GM12878 (cell line): ENCODE measurements at regions of chr1 and their contacts with region 1.

Region 1: DNA sequence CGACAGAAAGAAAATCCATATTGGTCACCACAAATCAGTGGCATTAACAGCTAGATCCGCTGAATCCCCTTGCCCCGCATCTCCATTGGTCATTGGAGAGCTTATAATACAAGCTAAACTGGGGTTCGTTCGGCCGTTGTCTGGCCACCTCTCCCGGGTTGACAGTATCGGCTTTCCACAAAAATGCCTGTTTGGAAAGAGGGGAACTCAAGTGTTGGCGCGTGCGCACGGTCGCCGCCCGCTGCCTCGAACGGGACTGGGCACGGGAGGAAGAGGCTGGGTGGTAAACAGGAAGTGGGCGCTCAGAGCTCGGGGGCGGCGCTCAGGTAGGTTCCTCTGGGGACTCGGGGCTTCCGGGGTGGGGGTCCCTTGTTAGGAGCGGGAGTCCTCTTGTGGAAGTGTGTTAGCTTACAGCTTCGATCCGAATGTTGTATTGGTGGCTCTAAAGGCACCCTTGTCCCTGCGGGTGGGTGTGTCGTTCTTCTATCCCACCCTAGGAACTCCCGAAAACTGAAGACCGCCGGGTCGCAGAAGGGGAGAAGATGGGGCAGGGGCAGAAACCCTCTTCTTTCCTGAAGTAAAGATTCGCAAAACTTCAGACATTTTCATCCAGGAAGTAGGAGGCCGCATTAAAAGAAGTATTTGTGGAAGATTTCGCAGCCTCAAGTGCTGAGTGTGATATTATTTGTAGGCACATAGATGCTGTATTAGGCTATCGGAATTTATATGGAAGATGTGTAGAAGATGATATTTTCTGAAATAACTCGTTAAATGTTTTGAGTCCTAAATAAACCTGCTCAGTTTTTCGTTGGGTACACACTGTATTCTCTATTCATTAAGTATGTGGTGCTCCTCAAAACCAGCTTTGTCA is 962 bp downstream of the BROX start:
- DNase-seq: peak; percentile 88
- ATAC-seq: peak; percentile 86
- H3K4me3 ChIP-seq: peak overlapping the region; percentile 81
- H3K27ac ChIP-seq: peak overlapping the region; percentile 98
- H3K4me1 ChIP-seq: no peaks in the 10 kb centered on the region
- H3K27me3 ChIP-seq: no peaks in the 10 kb centered on the region
- CTCF ChIP-seq: no peak
- EP300 ChIP-seq: peak in 1 of 2 experiments; percentile 31; a peak in 1 of 4 replicates
- POLR2A ChIP-seq: peak; percentile 70
- RAD21 ChIP-seq: peak; percentile 16; the same call in 1 of the 2 replicates

Region 2: GRCh38 chr1:222589462-222590302 is 123.6 kb before region 1 on chr1 and contains the start of gene TAF1A:
- CTCF ChIA-PET with region 1: no interaction called
- POLR2A ChIA-PET with region 1: interaction called, 5 read pairs
- RAD21 ChIA-PET with region 1: no interaction called
- SMC1A ChIA-PET with region 1: no interaction called
- in situ Hi-C with region 1: no loop called
- intact Hi-C with region 1: loop called (anchors 10 kb)
- DNase-seq: peak; percentile 43
- ATAC-seq: peak; percentile 98
- H3K4me3 ChIP-seq: peak within 1 kb of the TSS; percentile 78
- H3K27ac ChIP-seq: peak within 1 kb of the TSS; percentile 90
- H3K4me1 ChIP-seq: no peaks in the 10 kb centered on the region; the same call in 1 of the 2 replicates
- H3K27me3 ChIP-seq: no peaks in the 10 kb centered on the region
- CTCF ChIP-seq: no peak
- EP300 ChIP-seq: no peak
- POLR2A ChIP-seq: peak; percentile 84
- RAD21 ChIP-seq: peak; percentile 2; the same call in 1 of the 2 replicates
- polyA plus RNA-seq, gene TAF1A: 12.2 to 17.9 TPM

Region 3: GRCh38 chr1:222643938-222644635 is 69.2 kb before region 1 on chr1:
- CTCF ChIA-PET with region 1: interaction called, 10 read pairs
- POLR2A ChIA-PET with region 1: interaction called, 19 read pairs
- RAD21 ChIA-PET with region 1: interaction called, 10 read pairs
- SMC1A ChIA-PET with region 1: interaction called, 7 read pairs
- in situ Hi-C with region 1: no loop called
- intact Hi-C with region 1: loop called (anchors 5 kb)
- DNase-seq: peak; percentile 85
- ATAC-seq: peak; percentile 97
- H3K4me3 ChIP-seq: peak overlapping the region; percentile 92
- H3K27ac ChIP-seq: peak overlapping the region; percentile 91
- H3K4me1 ChIP-seq: 0 out of 2 replicates have a peak, but pooled peaks cover 4% of the 10 kb centered on the region
- H3K27me3 ChIP-seq: no peaks in the 10 kb centered on the region
- CTCF ChIP-seq: no peak
- EP300 ChIP-seq: 0 out of 4 replicates have a peak, but pooled peaks of 1 of the 2 experiments have one; percentile 21
- POLR2A ChIP-seq: peak; percentile 78
- RAD21 ChIP-seq: no peak

Region 4: DNA sequence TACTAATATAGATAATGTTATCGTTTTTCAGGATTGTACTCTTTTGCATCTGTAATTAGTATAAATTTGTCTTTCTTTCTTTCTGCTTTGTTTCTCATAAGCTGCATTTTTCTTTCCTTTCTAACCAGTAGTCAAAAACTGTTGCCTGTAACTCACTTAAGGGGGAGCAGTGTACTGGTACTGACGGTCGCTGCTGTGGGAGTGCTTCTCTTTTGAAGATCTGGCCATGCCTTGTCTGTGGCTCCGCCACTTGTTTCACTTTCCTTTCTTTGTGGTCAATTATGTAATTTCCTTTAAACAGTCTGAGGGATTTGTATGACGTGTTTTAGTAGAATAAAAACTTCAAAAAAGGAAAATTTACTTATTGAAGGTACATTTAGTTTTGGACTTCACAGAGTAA is 58.5 kb before region 1 on chr1:
- CTCF ChIA-PET with region 1: interaction called, 5 read pairs
- POLR2A ChIA-PET with region 1: interaction called, 4 read pairs
- RAD21 ChIA-PET with region 1: interaction called, 4 read pairs
- SMC1A ChIA-PET with region 1: interaction called, 3 read pairs
- in situ Hi-C with region 1: loop called (anchors 5 kb)
- intact Hi-C with region 1: loop called (anchors 2 kb)
- DNase-seq: peak; percentile 72
- ATAC-seq: peak; percentile 98
- H3K4me3 ChIP-seq: no peak overlapping the region
- H3K27ac ChIP-seq: no peak overlapping the region
- H3K4me1 ChIP-seq: peaks cover 30% of the 10 kb centered on the region
- H3K27me3 ChIP-seq: no peaks in the 10 kb centered on the region
- CTCF ChIP-seq: peak; percentile 24 to 38 (median 36); a peak in 5 of 6 replicates
- EP300 ChIP-seq: peak; percentile 42 to 56; a peak in 2 of 4 replicates
- POLR2A ChIP-seq: no peak
- RAD21 ChIP-seq: peak; percentile 49

Region 5: DNA sequence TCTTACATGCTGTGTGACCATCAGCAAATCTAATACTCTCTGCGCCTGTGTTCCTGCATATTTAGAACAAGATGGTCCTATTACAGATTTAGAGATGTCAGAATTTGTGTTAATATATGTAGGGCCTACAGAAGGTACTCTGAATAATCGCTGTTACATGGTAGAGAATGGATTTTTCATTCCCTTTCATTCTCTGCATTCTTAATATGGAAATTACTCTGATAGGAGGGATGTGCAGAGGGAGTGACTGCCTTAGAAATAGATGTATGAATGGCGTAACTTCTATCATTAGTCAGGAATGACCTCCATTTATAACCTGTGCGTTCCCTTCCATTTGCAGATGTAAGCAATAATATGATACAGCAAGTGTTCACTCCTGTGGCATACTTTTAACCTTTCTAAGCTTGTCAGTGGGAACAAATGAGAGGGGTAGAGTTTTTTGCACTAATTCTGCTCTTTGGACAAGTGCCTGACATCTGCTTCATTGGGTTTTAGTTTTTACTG is 49.8 kb before region 1 on chr1:
- CTCF ChIA-PET with region 1: no interaction called
- POLR2A ChIA-PET with region 1: no interaction called
- RAD21 ChIA-PET with region 1: no interaction called
- SMC1A ChIA-PET with region 1: no interaction called
- in situ Hi-C with region 1: loop called (anchors 5 kb)
- intact Hi-C with region 1: no loop called
- DNase-seq: no peak
- ATAC-seq: no peak
- H3K4me3 ChIP-seq: no peak overlapping the region
- H3K27ac ChIP-seq: no peak overlapping the region
- H3K4me1 ChIP-seq: no peaks in the 10 kb centered on the region
- H3K27me3 ChIP-seq: no peaks in the 10 kb centered on the region
- CTCF ChIP-seq: no peak
- EP300 ChIP-seq: no peak
- POLR2A ChIP-seq: no peak
- RAD21 ChIP-seq: no peak

Region 6: DNA sequence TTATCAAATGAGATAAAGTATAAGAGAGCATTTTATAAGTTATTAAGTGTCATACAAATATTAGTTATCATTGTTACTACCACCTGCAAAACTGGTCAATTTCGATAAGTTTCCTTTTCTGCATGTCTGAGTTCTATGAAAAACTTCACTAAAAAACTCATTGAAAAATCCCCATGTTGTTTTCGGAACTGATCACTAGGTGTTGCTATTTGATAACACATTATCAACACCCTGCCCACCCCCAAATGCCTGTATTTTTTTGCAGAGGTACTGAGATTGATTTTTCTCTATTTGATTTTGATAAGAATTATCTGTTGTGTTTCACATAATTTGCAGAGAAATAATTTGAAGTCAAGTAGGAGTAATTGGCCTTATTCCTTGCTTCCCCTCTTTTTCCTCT is 79.4 kb after region 1 on chr1:
- CTCF ChIA-PET with region 1: no interaction called
- POLR2A ChIA-PET with region 1: no interaction called
- RAD21 ChIA-PET with region 1: no interaction called
- SMC1A ChIA-PET with region 1: no interaction called
- in situ Hi-C with region 1: no loop called
- intact Hi-C with region 1: no loop called
- DNase-seq: no peak
- ATAC-seq: 0 out of 3 replicates have a peak, but pooled peaks have one; percentile 29
- H3K4me3 ChIP-seq: no peak overlapping the region
- H3K27ac ChIP-seq: no peak overlapping the region
- H3K4me1 ChIP-seq: no peaks in the 10 kb centered on the region
- H3K27me3 ChIP-seq: no peaks in the 10 kb centered on the region; a peak in 1 of 4 replicates
- CTCF ChIP-seq: peak; percentile 19 to 51 (median 32); a peak in 3 of 6 replicates
- EP300 ChIP-seq: no peak
- POLR2A ChIP-seq: no peak
- RAD21 ChIP-seq: peak; percentile 75

Region 7: DNA sequence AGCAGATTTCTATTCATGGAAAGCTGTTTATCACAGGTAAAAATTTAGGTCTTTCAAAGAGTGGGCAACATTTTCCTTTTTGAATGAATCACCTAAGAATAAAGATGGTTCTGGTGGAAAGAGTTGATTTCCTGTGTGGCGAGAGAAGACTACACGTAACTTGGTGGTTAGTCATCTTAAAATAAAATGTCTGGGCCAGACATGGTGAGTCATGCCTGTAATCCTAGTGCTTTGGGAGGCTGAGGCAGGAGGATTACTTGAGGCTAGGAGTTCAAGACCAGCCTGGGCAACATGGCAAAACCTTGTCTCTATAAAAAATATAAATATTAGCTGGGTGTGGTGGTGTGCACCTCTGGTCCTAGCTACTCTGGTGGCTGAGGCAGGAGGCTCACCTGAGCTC is 167.3 kb after region 1 on chr1:
- CTCF ChIA-PET with region 1: no interaction called
- POLR2A ChIA-PET with region 1: no interaction called
- RAD21 ChIA-PET with region 1: no interaction called
- SMC1A ChIA-PET with region 1: no interaction called
- in situ Hi-C with region 1: no loop called
- intact Hi-C with region 1: no loop called
- DNase-seq: no peak
- ATAC-seq: no peak
- H3K4me3 ChIP-seq: no peak overlapping the region
- H3K27ac ChIP-seq: no peak overlapping the region
- H3K4me1 ChIP-seq: no peaks in the 10 kb centered on the region
- H3K27me3 ChIP-seq: no peaks in the 10 kb centered on the region
- CTCF ChIP-seq: no peak
- EP300 ChIP-seq: no peak
- POLR2A ChIP-seq: no peak
- RAD21 ChIP-seq: no peak